Transverse colon (tissue), 4 donors: ENCODE measurements at regions of chr7 and their contacts with region 1.

Region 1: DNA sequence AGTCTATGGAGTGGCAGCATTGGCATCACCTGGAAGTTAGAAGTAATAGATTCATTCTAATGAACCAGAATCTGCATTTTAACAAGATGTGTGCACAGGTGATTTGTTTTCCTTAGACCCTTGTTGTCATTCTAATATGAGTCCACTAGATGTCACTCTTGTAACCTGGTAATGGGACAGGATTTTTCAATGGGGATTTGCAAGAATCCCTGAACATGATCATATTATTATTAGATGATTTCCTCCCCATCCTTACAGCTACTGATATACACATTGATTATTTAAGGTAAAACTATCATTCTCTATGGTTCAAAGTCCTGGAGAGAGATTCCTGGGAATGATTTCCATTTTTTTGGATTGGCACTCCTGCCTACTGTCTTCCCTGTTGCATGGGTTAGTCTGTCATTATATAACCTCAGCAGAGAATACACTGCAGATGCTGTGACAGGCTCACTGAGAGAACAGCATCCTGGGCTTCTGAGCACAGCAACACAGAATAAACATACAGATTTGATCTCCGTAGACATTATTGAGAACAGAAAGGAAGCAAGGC is 194.9 kb downstream of the SUGCT start:
- DNase-seq: no peak
- H3K4me3 ChIP-seq: no peak overlapping the region
- H3K27ac ChIP-seq: peak overlapping the region in 1 of 4 donors; percentile 1
- H3K4me1 ChIP-seq: peaks cover 0 to 21% (median 7%) of the 10 kb centered on the region in 4 donors
- H3K27me3 ChIP-seq: no peaks in the 10 kb centered on the region
- CTCF ChIP-seq: peak; percentile 65 to 80 (median 74)
- EP300 ChIP-seq: no peak
- POLR2A ChIP-seq: no peak

Region 2: GRCh38 chr7:40202851-40203250 is 126.8 kb before region 1 on chr7:
- in situ Hi-C with region 1: no loop called
- intact Hi-C with region 1: loop called (anchors 2 kb)
- DNase-seq: no peak
- H3K4me3 ChIP-seq: no peak overlapping the region
- H3K27ac ChIP-seq: no peak overlapping the region
- H3K4me1 ChIP-seq: no peaks in the 10 kb centered on the region
- H3K27me3 ChIP-seq: no peaks in the 10 kb centered on the region
- CTCF ChIP-seq: no peak
- EP300 ChIP-seq: no peak
- POLR2A ChIP-seq: no peak

Region 3: GRCh38 chr7:40447345-40447744 is 117.7 kb after region 1 on chr7:
- in situ Hi-C with region 1: no loop called
- intact Hi-C with region 1: no loop called
- DNase-seq: no peak
- H3K4me3 ChIP-seq: no peak overlapping the region
- H3K27ac ChIP-seq: no peak overlapping the region
- H3K4me1 ChIP-seq: no peaks in the 10 kb centered on the region
- H3K27me3 ChIP-seq: no peaks in the 10 kb centered on the region
- CTCF ChIP-seq: no peak
- EP300 ChIP-seq: no peak
- POLR2A ChIP-seq: no peak

Region 4: DNA sequence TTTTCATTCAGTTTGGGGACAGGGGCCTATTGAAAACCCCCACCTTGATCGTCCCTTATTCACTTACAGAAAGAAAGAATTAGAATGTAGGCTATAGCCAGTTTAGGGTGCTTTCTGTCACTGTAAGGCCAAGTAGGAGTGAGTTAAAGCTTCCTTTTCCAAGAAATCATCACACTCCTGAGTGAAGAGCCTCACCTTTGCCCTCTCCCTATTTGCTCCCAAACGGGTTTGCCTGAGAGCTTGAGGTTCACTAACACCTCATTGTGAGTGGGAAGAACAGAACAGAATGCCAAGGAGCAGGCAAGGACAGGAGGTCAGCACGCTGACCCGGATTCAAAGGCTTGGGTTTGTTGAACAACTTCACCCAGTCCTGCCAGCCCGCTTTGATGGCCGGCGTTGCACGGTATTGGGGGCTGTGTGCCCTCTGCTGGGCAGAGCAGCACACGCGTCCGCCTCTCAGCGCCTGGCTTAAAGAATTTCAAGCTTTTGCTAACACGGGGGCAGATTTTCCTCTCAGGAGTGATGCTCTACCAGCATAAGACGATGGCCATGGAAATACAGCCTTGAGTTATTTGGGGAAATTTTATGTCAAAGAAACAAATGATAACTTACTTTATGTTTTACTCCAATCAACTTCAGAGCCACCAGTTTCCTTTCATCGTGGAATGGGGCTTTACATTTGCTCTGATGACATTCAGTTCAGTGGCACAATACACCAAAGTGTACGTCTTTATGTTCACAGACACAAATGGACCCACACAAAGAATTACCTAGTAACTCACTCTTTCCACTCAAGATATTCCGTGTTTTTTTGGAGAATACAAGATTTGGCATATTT is 275.1 kb after region 1 on chr7:
- in situ Hi-C with region 1: loop called in 1 of 4 experiments (anchors 25 kb)
- intact Hi-C with region 1: no loop called
- DNase-seq: peak; percentile 22
- H3K4me3 ChIP-seq: no peak overlapping the region
- H3K27ac ChIP-seq: no peak overlapping the region
- H3K4me1 ChIP-seq: no peaks in the 10 kb centered on the region
- H3K27me3 ChIP-seq: no peaks in the 10 kb centered on the region
- CTCF ChIP-seq: peak in 4 of 5 experiments; percentile 31 to 47 (median 36)
- EP300 ChIP-seq: no peak
- POLR2A ChIP-seq: no peak

Region 5: DNA sequence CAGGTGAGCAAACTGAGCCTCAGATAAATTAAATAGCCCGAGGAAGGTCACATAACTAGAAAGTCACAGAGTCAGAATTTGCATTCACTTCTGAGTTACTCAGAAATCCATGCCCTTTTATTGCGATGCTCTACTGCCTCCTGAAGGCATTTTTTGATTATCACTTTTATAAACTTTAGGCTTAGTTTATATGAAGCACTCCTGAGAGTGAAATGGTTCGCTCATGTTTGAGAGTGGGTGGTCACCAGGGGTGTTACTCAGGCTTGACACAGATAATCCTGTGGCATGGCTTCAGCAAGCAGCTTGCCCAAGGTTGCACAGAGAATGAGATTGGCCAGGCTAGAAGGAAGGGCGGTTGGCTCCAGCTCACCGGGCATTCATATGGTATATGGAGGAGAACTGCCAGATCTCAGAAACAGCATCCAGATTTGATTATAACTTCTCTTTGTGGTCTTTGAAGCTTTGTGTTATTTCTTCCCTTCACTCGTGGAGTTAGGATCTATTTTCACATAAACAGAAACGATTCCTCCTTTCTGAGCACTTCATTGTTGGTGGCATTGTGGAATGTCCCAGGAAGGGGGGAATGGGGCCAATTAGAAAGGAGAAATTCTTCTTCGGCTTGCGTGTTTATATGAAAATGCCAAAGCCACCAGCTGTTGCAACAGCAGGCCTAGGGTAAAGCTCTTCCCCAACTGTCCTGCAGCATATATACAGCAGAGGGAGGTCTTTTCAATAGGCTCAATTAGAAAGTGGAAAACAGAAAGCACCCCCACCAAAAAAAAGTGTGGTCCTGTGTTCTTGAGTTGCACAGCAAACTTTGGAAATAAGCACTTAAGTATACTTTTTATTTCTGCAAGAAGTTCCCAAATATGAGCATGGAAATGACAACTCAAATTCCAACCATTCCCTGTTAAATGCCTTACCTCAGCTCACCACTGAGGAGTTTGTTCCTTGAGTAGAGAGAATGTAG is 433.9 kb after region 1 on chr7:
- in situ Hi-C with region 1: loop called in 1 of 4 experiments (anchors 25 kb)
- intact Hi-C with region 1: no loop called
- DNase-seq: no peak
- H3K4me3 ChIP-seq: no peak overlapping the region
- H3K27ac ChIP-seq: no peak overlapping the region
- H3K4me1 ChIP-seq: peaks cover 0 to 19% (median 6%) of the 10 kb centered on the region in 4 donors
- H3K27me3 ChIP-seq: no peaks in the 10 kb centered on the region
- CTCF ChIP-seq: no peak
- EP300 ChIP-seq: no peak
- POLR2A ChIP-seq: no peak

Region 6: DNA sequence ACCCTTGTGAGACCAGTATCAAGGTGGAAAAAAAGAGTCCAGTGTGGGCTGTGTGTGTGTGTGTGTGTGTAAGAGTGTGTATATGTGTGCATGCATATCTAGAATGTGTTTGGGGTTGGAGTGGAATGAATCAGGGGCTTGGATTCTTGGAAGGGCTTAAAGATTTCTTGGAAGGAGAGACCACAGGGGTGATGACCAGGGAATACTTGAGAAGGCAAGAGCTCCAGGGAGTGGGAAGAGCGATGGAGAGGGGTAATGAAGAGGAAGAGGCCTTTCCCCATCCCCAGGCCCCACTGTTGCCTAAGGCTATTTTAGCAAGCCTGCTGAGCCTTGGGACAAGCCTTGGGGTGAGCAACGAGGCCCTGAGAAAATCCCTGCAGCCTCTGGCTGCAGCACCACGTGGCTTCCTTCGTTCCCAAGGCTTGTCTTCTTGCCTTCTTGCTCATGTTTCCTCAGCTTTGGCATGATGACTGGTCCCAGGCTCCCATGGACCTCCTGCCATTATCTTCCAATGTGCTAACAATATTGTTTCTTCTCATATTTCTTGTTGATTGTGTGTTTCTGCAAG is 709.8 kb after region 1 on chr7:
- in situ Hi-C with region 1: no loop called
- intact Hi-C with region 1: no loop called
- DNase-seq: no peak
- H3K4me3 ChIP-seq: no peak overlapping the region
- H3K27ac ChIP-seq: no peak overlapping the region
- H3K4me1 ChIP-seq: no peaks in the 10 kb centered on the region
- H3K27me3 ChIP-seq: no peaks in the 10 kb centered on the region
- CTCF ChIP-seq: no peak
- EP300 ChIP-seq: no peak
- POLR2A ChIP-seq: no peak

Region 7: GRCh38 chr7:41696314-41696916 is 1366.7 kb after region 1 on chr7:
- in situ Hi-C with region 1: loop called (anchors 10 to 25 kb)
- intact Hi-C with region 1: no loop called
- DNase-seq: peak; percentile 70
- H3K4me3 ChIP-seq: peak overlapping the region in 2 of 4 donors; percentile 0 to 32
- H3K27ac ChIP-seq: peak overlapping the region in 3 of 4 donors; percentile 8 to 54 (median 19)
- H3K4me1 ChIP-seq: peaks cover 0 to 9% (median 1%) of the 10 kb centered on the region in 4 donors
- H3K27me3 ChIP-seq: peaks cover 30% of the 10 kb centered on the region
- CTCF ChIP-seq: peak; percentile 66 to 73 (median 68)
- EP300 ChIP-seq: no peak
- POLR2A ChIP-seq: no peak

Region 8: DNA sequence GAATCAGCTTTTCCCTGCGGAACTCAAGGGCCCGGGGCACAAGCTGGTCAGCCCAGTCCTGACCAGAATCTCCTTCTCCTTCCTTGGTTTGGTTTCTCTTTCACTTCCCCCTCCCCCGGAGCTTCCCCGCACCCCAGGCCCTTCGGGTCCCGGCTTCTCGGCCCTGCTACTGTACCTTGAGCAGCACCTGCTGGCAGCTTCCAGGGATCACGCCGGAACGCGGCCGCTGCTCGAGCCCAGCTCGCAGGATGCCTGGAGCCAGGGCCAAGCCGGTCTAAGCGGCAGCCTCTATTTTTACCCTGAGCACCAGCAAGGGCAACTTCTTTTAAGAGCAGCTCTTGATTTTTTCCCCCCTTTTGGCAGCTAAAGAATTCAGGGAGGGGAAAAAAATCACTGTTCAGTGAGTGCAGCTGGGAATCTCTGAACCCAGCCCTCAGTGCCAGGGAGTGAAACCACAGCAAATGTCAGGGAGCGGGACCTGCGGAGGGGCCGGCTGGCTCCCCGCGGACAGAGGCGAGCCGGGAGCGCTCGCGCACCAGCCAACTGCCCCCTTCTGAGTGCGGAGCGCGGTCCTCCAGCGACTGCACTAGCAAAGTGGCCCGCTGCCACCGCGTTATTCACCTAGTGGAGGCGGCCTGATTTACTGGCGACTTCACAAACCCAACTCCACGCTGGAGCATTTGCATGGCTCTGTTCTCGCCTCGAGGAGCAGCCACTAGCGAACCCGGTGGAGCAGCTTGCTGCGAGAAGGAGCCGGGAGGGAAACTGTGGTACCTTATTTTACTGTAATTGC is 1375.6 kb after region 1 on chr7:
- in situ Hi-C with region 1: loop called in 3 of 4 experiments (anchors 25 kb)
- intact Hi-C with region 1: no loop called
- DNase-seq: peak; percentile 90
- H3K4me3 ChIP-seq: peak overlapping the region; percentile 9 to 59 (median 41)
- H3K27ac ChIP-seq: peak overlapping the region; percentile 70 to 81 (median 80)
- H3K4me1 ChIP-seq: peaks cover 0 to 12% (median 8%) of the 10 kb centered on the region in 4 donors
- H3K27me3 ChIP-seq: no peaks in the 10 kb centered on the region
- CTCF ChIP-seq: peak; percentile 59 to 85 (median 71)
- EP300 ChIP-seq: no peak
- POLR2A ChIP-seq: no peak